Activated CD4-positive, alpha-beta T cell treated with anti-CD3 and anti-CD28 coated beads for 36 hours (primary cell): ENCODE measurements at regions of chr1 and their contacts with region 1.

Region 1: GRCh38 chr1:1615256-1616044 is at the start of gene MIB2:
- DNase-seq: peak; percentile 98
- ATAC-seq: peak; percentile 84
- H3K4me3 Mint-ChIP-seq: peak within 1 kb of the TSS; percentile 96
- H3K27ac Mint-ChIP-seq: peak within 1 kb of the TSS; percentile 95
- H3K4me1 Mint-ChIP-seq: peaks cover 24% of the 10 kb centered on the region
- H3K27me3 Mint-ChIP-seq: no peaks in the 10 kb centered on the region
- total RNA-seq, gene MIB2: 37.1 TPM

Region 2: DNA sequence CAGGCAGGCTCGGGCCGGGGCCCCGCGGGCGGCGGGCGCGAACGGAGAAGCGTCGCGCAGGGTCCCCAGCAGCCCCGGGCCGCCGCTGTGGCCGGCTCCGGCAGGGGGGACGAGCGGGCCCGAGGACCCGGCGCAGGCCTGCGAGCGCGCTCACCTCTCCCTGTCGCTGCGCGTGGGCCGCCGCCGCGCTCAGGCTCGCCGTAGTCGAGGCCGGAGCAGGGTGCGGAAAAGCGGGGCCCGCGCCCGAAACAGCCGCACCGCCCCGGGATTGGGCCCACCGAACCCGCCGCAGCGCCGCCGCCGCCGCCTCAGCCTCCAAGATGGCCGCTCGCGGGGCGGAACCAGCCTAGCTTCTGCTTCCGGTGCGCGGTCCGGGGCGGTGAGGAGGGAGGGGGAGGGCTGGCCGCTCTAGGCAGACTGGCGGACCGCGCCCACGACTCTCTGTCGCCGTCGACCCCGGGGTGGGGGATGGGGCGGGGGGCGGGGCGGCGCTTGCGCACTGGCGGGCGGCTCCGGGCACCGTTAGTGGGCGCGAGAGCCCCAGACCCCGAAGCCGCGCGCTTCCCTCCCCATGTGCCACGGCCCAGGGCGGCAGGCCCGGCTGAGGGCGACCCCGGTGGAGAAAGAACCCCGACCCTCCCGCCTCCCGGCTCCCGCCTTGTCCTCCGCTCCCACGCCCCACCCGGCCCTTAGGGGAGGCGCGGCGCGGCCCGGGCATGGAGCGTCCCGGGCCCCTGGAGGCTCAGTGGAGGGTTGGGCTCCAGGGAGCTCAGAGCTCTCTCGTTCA is 341.7 kb before region 1 on chr1 and contains the start of gene UBE2J2:
- CTCF ChIA-PET with region 1: no interaction called
- POLR2A ChIA-PET with region 1: no interaction called
- intact Hi-C with region 1: loop called in 1 of 2 experiments (anchors 10 kb)
- DNase-seq: peak; percentile 97
- ATAC-seq: peak; percentile 94
- H3K4me3 Mint-ChIP-seq: peak within 1 kb of the TSS; percentile 85
- H3K27ac Mint-ChIP-seq: peak within 1 kb of the TSS; percentile 83
- H3K4me1 Mint-ChIP-seq: peaks cover 36% of the 10 kb centered on the region
- H3K27me3 Mint-ChIP-seq: no peaks in the 10 kb centered on the region
- total RNA-seq, gene UBE2J2: 57.4 to 60.2 TPM

Region 3: GRCh38 chr1:1374929-1375662 is 240.4 kb before region 1 on chr1 and contains the start of gene AURKAIP1:
- CTCF ChIA-PET with region 1: no interaction called
- POLR2A ChIA-PET with region 1: no interaction called
- intact Hi-C with region 1: loop called in 1 of 2 experiments (anchors 1 kb)
- DNase-seq: peak; percentile 98
- ATAC-seq: peak; percentile 97
- H3K4me3 Mint-ChIP-seq: peak within 1 kb of the TSS; percentile 87
- H3K27ac Mint-ChIP-seq: peak within 1 kb of the TSS; percentile 91
- H3K4me1 Mint-ChIP-seq: peaks cover 26% of the 10 kb centered on the region
- H3K27me3 Mint-ChIP-seq: no peaks in the 10 kb centered on the region
- total RNA-seq, gene AURKAIP1: 89.5 to 117 TPM

Region 4: DNA sequence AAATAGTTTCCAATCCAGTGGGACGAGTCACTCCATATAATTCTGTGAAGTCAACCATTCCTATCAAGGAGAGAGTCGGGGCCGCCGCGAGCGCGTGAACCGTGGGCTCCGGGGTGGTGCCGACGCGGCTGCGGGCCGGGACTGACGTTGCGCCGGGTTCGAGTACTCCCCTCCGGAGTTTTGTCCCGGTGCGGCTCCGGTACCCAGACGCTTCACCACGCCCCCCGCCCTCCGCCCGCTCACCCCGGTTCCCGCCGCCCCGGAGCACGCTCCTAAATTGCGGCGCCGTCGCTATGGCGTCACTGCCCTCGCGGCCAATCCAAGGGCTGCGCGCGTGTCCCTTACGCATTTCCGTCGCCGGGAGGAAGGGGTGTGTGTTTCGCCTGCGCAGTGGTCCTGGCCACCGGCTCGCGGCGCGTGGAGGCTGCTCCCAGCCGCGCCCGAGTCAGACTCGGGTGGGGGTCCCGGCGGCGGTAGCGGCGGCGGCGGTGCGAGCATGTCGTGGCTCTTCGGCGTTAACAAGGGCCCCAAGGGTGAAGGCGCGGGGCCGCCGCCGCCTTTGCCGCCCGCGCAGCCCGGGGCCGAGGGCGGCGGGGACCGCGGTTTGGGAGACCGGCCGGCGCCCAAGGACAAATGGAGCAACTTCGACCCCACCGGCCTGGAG is 143.9 kb before region 1 on chr1 and contains the start of gene ATAD3B:
- CTCF ChIA-PET with region 1: interaction called, 3 read pairs
- POLR2A ChIA-PET with region 1: no interaction called
- intact Hi-C with region 1: loop called in 1 of 2 experiments (anchors 1 kb)
- DNase-seq: peak; percentile 98
- ATAC-seq: peak; percentile 97
- H3K4me3 Mint-ChIP-seq: peak within 1 kb of the TSS; percentile 89
- H3K27ac Mint-ChIP-seq: peak within 1 kb of the TSS; percentile 67
- H3K4me1 Mint-ChIP-seq: peaks cover 21% of the 10 kb centered on the region
- H3K27me3 Mint-ChIP-seq: no peaks in the 10 kb centered on the region
- total RNA-seq, gene ATAD3B: 26.2 to 39.2 TPM

Region 5: DNA sequence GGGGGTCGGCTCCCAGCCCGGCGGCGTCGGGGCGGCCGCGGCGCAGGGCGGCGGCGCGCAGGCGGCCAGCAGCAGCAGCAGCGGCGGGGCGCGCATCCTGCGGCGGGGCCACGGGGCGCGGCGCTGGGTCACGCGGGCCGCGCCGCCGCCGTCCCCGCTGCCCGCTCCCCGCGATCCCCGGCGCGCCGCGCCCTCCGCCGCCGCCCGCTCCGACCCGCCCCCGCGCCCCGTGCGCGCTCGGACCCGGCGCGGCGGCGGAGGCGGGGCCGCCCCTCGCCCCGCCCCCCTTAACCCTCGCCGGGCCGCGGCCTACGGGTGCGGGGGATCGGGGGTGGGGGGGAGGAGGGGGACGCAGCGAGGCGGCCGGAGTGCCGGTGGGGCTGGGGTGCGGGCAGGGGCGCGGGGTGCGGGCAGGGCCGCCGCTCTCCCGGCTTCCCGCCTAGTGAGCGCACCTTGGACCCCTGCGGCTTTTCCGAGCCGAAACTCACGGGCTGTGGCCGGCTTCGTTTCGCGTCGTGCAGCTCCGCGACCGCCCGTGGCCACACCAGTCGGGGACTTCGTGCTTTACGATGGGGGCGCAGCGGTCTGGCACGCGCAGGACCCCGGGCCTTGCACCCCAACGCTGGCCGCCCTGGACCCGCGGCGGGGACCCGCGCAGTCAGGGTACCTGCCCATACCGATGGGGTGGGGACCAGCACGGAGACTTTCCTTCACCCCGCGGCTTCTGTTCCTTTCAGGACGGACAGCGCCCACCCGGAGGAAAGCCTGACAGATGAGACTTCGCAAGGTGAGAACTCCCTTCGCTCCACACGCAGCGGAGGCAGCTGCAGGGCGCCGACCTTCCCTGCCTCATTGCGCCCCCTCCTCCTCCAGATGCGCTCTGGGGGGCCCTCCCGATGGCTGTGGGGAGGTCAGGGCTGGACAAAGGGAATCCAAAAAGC is 15.3 kb before region 1 on chr1 and contains the start of gene FNDC10:
- CTCF ChIA-PET with region 1: interaction called, 3 read pairs
- POLR2A ChIA-PET with region 1: no interaction called
- intact Hi-C with region 1: loop called in 1 of 2 experiments (anchors 1 kb)
- DNase-seq: no peak
- ATAC-seq: peak; percentile 10
- H3K4me3 Mint-ChIP-seq: peak within 1 kb of the TSS; percentile 63
- H3K27ac Mint-ChIP-seq: no peak within 1 kb of the TSS
- H3K4me1 Mint-ChIP-seq: peaks cover 5% of the 10 kb centered on the region
- H3K27me3 Mint-ChIP-seq: peaks cover 6% of the 10 kb centered on the region
- total RNA-seq, gene FNDC10: 1.7 to 1.9 TPM

Region 6: GRCh38 chr1:1906185-1907097 is 291.0 kb after region 1 on chr1:
- CTCF ChIA-PET with region 1: no interaction called
- POLR2A ChIA-PET with region 1: no interaction called
- intact Hi-C with region 1: loop called in 1 of 2 experiments (anchors 1 kb)
- DNase-seq: peak; percentile 86
- ATAC-seq: peak; percentile 52
- H3K4me3 Mint-ChIP-seq: peak overlapping the region; percentile 0
- H3K27ac Mint-ChIP-seq: no peak overlapping the region
- H3K4me1 Mint-ChIP-seq: peaks cover 14% of the 10 kb centered on the region
- H3K27me3 Mint-ChIP-seq: no peaks in the 10 kb centered on the region

Region 7: DNA sequence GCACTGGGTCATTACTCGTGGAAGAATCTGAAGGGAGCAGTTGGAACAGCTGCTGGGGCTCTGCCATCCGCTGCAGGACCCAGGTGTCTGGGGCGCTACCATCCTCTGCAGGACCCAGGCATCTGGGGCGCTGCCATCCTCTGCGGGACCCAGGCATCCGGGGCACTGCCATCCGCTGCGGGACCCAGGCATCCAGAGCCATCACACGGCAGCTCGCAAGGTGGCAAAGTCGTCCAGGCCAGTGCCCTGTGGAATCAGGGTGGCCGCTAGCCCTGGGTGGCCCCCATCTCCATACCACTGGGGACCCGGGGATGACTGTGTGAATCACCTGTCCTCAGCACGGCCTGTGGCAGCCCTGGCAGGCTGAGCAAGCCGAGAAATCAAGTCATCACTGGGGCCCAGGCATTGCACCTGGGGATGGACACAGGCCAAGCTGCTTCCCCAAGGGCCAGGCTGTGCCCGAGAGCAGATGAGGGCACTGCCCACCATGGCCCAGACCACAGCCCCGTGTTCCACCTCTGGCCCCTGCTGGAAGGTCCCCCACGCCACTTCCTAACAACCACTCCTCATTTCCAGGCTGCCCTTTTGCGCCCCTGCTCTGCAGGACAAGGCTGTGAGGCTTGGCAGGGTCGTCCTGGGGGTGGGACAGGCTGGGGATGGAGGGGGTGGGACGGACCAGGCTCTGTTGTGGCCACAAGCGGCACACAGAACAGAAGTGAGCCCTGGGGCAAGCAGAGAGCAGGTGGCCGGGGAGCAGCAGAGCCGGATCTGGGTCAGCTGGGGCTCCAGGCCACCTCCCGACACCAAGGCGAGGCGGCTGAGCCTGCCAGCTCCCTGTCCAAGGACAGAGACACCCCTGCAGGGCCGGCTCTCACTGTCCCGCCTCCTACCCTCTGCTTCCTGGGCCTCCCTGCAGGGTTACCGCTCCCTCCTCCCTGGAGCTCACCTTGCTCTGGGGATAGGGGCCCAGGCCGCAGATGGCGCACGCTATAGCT is 416.4 kb after region 1 on chr1:
- CTCF ChIA-PET with region 1: no interaction called
- POLR2A ChIA-PET with region 1: no interaction called
- intact Hi-C with region 1: no loop called
- DNase-seq: no peak
- ATAC-seq: no peak
- H3K4me3 Mint-ChIP-seq: no peak overlapping the region
- H3K27ac Mint-ChIP-seq: no peak overlapping the region
- H3K4me1 Mint-ChIP-seq: no peaks in the 10 kb centered on the region
- H3K27me3 Mint-ChIP-seq: no peaks in the 10 kb centered on the region